Heart right ventricle (tissue), 16 donors: ENCODE measurements at regions of chr12 and their contacts with region 1.

Region 1: GRCh38 chr12:109597795-109598427 is 24.3 kb downstream of the MVK start:
- DNase-seq: peak; percentile 86 to 90
- ATAC-seq: peak; percentile 75 to 93 (median 91)
- H3K4me3 ChIP-seq: no peak overlapping the region
- H3K27ac ChIP-seq: no peak overlapping the region
- H3K4me1 ChIP-seq: peaks cover 0 to 26% (median 12%) of the 10 kb centered on the region in 9 donors
- H3K27me3 ChIP-seq: no peaks in the 10 kb centered on the region
- CTCF ChIP-seq: peak; percentile 90 to 99 (median 97)

Region 2: GRCh38 chr12:109713187-109713984 is 115.5 kb after region 1 on chr12 and contains the start of gene FAM222A:
- intact Hi-C with region 1: loop called in 8 of 10 experiments (anchors 5 to 10 kb)
- DNase-seq: peak; percentile 97 to 99
- ATAC-seq: peak; percentile 91 to 98 (median 97)
- H3K4me3 ChIP-seq: peak within 1 kb of the TSS; percentile 47 to 74 (median 70)
- H3K27ac ChIP-seq: peak within 1 kb of the TSS in 9 of 10 donors; percentile 40 to 85 (median 73)
- H3K4me1 ChIP-seq: peaks cover 5 to 57% (median 35%) of the 10 kb centered on the region in 9 donors
- H3K27me3 ChIP-seq: peaks cover 0 to 72% (median 21%) of the 10 kb centered on the region in 7 donors
- CTCF ChIP-seq: peak in 3 of 9 donors; percentile 15 to 44 (median 17)
- total RNA-seq, gene FAM222A: 3.4 to 26.0 (median 8.6) TPM

Region 3: DNA sequence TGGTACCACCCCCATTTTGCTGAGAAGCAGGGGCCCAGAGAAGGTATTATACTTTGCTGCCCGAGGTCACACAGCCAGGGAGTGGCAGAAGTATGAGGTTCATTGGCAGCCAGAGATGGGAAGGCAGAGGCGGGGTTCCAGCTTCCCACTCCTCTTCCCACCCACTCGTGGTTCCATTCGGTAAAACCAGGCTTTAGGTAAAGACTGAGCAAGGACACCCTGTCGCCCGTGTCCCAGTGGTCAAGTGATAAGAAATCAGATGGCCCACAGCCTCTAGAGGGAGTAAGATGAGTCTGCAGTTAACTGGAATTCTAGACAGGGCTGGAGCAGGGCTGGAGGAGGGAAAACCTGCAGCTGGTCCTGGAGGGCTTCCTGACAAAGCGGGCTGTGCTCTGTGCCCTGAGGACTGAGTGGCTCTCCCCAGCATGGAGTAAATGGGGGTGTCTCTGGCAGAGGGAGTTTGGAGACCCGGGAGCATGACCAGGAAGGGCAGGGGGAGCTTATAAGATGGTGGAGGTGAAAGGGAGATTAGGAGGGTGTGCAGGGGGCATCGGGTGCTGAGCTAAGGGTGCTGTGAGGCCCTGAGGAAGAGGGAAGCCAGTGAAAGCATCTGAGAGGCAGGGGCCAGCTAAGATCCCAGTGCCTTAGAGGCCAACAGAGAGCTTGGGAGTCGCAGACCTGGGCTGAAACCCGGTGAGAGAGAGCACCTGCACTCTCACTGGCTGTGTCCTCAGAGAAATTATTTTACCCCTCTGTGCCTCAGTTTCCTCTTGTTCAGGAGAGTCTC is 121.5 kb after region 1 on chr12:
- intact Hi-C with region 1: loop called in 8 of 10 experiments (anchors 5 to 10 kb)
- DNase-seq: no peak
- ATAC-seq: no peak
- H3K4me3 ChIP-seq: no peak overlapping the region
- H3K27ac ChIP-seq: peak overlapping the region; percentile 74 to 94 (median 88)
- H3K4me1 ChIP-seq: peaks cover 15 to 97% (median 58%) of the 10 kb centered on the region in 9 donors
- H3K27me3 ChIP-seq: peaks cover 0 to 49% (median 0%) of the 10 kb centered on the region in 7 donors
- CTCF ChIP-seq: peak in 1 of 9 donors; percentile 9

Region 4: DNA sequence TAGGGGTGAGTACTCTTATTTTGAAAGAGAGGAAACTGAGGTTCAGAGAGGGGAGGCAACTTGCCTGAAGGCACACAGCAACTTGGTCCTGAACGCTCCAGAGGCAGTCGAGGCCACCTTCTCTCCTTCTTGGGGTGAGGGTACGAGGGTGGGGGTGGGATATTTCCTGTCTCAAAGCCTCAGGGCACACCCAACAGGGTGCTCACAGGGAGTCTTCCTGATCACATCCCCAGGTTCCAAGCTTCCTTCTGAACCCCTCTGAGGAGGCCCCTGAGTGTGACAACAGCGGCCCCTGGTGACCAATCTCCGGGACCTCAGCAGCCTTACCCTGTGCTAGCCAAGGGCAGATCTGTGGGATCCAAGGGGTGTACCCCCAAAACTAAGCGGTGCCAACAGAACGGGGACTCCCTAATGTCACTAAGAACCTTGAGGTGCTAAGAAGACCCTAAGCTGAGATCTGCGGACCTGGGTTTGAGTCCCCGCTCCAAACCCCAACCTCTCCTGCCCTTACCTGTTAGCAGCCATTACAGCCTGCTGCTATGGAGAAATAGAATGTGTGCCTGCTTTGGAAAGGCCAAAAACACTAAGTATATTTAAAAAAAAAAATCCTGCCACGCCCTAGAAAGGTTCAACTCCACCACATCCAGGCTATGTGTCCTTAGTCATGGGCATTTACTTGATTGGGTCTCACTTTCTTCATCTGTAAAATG is 177.4 kb after region 1 on chr12:
- intact Hi-C with region 1: loop called (anchors 1 to 2 kb)
- DNase-seq: peak; percentile 73 to 79
- ATAC-seq: peak; percentile 76 to 92 (median 85)
- H3K4me3 ChIP-seq: no peak overlapping the region
- H3K27ac ChIP-seq: no peak overlapping the region
- H3K4me1 ChIP-seq: peaks cover 0 to 12% (median 6%) of the 10 kb centered on the region in 9 donors
- H3K27me3 ChIP-seq: no peaks in the 10 kb centered on the region
- CTCF ChIP-seq: peak; percentile 78 to 94 (median 87)

Region 5: DNA sequence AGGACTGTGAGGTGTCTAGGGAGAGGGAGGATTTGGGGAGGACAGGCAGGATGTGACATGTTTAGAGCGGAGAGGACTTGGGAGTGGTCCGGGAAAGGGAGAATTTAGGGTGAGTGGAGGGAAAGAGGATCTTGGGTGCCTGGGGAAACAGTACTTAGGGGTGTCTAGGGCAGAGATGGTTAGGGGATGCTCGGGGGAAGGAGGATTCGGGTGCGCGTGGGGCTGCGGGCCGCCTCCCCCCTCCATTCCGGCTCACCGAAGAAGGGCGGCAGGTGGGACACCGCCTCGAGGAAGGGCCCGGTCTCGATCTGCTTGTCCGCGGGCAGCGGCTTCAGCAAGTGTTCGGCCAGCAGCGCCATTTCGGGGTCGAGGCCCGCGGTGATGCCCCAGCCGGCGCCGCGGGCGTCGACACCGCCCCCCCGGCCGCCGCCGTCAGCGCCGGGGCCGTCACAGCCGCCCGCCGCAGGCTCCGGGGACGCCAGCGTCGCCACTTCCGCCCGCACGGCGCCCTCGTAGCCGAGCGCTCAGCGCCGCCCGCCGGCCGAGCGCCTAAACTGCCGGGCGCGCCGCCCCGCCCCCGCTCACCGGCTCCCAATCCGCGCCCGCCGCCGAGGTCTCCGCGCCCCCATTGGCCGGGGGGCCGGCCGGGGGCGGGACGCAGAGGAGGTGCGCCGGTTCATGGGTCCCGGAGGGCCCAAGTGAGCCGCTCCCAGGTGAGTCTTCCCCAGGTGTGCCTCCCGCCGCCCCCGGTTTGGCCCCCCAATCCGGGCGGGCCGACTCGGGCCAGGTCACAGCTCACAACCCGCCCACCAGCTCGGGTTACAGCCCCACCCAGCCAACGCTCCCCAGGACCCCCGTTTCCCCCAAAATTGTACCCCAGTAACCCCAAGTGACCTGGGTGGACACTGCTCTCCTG is 282.4 kb after region 1 on chr12 and contains the start of gene GLTP:
- intact Hi-C with region 1: loop called in 1 of 10 experiments (anchors 10 kb)
- DNase-seq: peak; percentile 81 to 89
- ATAC-seq: peak; percentile 95 to 99 (median 96)
- H3K4me3 ChIP-seq: peak within 1 kb of the TSS; percentile 60 to 99 (median 88)
- H3K27ac ChIP-seq: peak within 1 kb of the TSS in 9 of 10 donors; percentile 46 to 95 (median 87)
- H3K4me1 ChIP-seq: peaks cover 11 to 32% (median 30%) of the 10 kb centered on the region in 9 donors
- H3K27me3 ChIP-seq: no peaks in the 10 kb centered on the region
- CTCF ChIP-seq: peak; percentile 26 to 87 (median 56)
- total RNA-seq, gene GLTP: 18.0 to 28.0 (median 22.0) TPM